ENCODE measurements at regions of chr5 and their contacts with region 1.

Region 1: DNA sequence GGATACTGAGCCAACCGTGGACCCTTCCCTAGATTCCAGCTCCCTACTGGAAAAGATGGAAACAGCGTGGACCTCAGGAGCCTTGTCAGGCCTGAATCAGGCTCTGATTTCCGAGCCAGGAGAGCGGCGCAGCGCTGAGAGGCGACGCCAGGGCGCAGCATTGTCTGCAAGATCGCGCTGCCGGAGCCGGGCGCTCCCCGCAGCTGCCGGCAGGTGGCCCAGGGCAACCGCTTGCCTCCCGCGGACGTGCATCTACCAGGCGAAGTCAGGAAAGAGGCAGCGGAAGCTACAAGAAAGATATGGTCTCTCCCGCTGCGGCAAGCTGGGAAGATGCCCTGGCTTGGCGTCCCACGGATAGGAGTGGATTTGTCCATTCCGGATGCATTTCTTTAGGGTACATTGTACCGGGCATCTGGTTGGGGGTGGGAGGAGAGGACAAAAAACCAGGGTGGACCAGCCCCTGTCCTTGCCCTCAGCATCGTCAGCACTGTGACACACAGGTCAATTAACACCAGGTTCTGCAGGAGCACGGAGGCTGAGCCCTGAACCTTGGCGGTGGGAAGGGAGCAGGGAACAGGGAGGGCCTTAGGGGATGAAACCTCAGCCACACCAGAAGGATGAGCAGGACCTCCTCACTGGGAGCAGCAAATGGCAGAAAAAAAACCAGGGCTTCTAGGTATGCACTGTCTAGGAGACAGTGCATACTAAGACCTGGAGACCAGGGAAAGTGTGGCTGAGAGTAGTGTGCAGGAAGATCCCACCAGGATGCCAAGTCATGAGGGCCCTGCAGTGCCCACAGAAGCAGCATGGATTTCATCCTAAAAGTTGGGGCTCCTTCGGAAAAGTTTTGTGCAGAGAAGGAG is 55.9 kb downstream of the SFXN1 start:
- DNase-seq: peak; percentile 88
- ATAC-seq: peak; percentile 97

Region 2: GRCh38 chr5:175162036-175162435 is 372.3 kb before region 1 on chr5:
- intact Hi-C with region 1: no loop called
- DNase-seq: no peak
- ATAC-seq: no peak

Region 3: DNA sequence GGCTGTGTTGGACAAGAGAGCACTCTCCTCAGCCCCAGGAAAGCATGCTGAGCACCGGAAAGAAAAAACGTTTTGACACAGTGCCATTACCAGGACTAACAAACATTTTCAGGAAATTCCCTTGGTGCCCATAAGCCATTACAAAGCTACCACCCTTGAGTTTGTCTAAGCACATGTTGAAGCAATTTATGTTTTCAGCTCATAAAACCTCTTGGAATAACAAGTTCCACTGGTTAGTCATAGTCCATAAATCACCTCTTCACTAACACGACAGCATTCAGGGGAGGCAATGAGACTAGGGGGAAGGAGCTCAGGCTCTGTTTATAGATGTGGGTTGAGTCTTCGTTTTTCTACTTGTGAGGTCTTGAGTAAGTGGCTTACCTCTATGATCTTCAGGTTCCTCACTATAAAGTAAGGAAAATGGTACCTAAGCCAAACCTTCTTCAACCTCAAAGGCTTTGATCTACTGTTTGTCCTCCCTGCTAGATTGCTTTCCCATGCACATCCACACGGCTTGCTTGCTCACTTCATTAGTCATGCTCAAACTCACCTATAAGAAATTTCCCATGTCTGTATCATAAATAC is 155.8 kb before region 1 on chr5:
- intact Hi-C with region 1: no loop called
- DNase-seq: no peak
- ATAC-seq: no peak

Region 4: DNA sequence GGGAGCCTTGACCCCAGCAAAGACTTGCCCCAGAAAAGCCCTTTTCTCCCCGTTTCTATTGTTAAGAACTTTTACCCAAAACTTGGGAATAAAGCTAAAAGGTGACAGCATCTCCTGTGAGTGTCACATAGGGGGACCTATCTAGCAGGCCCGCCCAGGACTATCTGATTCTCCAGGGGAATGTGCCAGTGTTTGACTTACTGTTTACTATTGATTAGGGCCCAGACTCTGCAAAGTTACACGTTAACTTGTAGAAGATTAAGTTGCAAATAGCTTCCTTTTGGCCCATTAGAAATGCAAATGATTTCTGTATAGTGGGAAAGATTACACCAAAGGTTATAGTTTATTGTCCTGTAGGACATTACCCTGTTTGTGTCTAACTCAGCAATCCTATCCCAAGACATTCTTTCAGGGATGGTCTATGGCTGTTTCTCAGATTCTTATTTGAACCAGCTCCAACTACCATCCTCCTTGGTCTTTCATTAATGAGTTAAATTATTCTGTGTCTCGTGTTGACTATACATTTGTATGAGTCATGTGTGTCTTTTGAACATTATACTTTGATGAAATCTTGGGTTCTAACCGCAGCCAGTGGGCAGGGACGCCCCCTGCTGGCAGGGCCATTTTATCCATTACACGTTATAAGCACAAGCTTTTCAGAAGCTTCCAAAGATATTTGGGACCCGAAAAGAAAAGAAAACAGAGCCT is 184.3 kb after region 1 on chr5:
- intact Hi-C with region 1: loop called (anchors 5 kb)
- DNase-seq: peak; percentile 84
- ATAC-seq: peak; percentile 55